ENCODE measurements at regions of chr14 and their contacts with region 1.

Region 1: GRCh38 chr14:72476657-72477499 is 417.0 kb downstream of the DPF3 start:
- DNase-seq: peak; percentile 80
- H3K4me3 Mint-ChIP-seq: peak overlapping the region; percentile 35
- H3K27ac Mint-ChIP-seq: peak overlapping the region; percentile 73
- H3K4me1 Mint-ChIP-seq: peaks cover 69% of the 10 kb centered on the region
- H3K27me3 Mint-ChIP-seq: peaks cover 5% of the 10 kb centered on the region

Region 2: GRCh38 chr14:72443991-72444441 is 32.9 kb before region 1 on chr14:
- intact Hi-C with region 1: loop called (anchors 5 kb)
- DNase-seq: peak; percentile 31
- H3K4me3 Mint-ChIP-seq: no peak overlapping the region
- H3K27ac Mint-ChIP-seq: peak overlapping the region; percentile 23
- H3K4me1 Mint-ChIP-seq: peaks cover 62% of the 10 kb centered on the region
- H3K27me3 Mint-ChIP-seq: no peaks in the 10 kb centered on the region

Region 3: GRCh38 chr14:72451054-72451972 is 25.6 kb before region 1 on chr14:
- intact Hi-C with region 1: loop called (anchors 2 kb)
- DNase-seq: peak; percentile 32
- H3K4me3 Mint-ChIP-seq: peak overlapping the region; percentile 13
- H3K27ac Mint-ChIP-seq: peak overlapping the region; percentile 62
- H3K4me1 Mint-ChIP-seq: peaks cover 44% of the 10 kb centered on the region
- H3K27me3 Mint-ChIP-seq: peaks cover 26% of the 10 kb centered on the region

Measured in activated T-helper 2 cell treated with anti-CD3 and anti-CD28 coated beads, Interferon-gamma antibody, Interleukin-2, Interleukin-4, amounts not matched to agents 10 μg/mL and 5 μg/mL and 100 μg/mL, durations not matched to agents 14 hours and 24 hours and 36 hours (primary cell).